ENCODE measurements at regions of chr9 and their contacts with region 1.

Region 1: GRCh38 chr9:98848450-98849149 is 41.1 kb downstream of the GALNT12 start:
- DNase-seq: peak; percentile 80 to 86 (median 81)
- H3K4me3 ChIP-seq: no peak overlapping the region
- H3K27ac ChIP-seq: no peak overlapping the region
- H3K4me1 ChIP-seq: peaks cover 0 to 6% (median 0%) of the 10 kb centered on the region in 4 experiments
- H3K27me3 ChIP-seq: no peaks in the 10 kb centered on the region

Region 2: DNA sequence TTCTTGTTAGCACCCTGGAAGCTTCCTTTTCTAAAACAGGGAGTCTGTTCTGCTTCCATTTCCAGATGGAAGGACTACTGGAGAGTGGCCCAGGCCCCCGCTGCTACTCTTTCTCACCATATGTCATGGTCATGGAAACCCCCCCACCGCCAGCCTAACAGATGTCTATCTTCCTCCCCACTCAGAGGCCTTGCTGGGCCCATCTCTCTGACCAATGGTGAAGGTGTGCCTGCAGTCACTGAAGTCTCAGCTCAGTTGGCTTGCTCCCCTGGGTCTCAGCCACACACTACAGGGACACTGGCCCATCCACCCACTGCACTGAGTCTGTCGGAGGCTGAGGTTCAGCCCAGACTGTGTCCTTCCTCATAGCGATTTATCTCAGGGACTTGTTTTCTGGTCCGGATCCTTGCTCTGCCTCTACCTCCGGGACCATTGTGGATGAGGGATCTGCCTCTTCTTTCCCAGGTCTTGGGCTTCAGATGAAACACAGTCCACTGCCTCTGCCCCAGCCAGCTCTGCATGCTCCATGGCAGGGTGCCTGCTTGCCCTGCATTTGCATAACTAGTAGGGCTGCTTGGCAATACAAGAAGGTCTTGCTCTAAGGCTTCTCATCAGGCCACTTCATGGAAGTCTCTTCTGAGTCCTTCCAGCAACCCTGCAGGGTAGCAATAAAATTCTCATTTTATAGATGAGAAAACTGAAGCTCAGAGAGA is 10.3 kb before region 1 on chr9:
- CTCF ChIA-PET with region 1: interaction called, 14 read pairs
- POLR2A ChIA-PET with region 1: no interaction called
- DNase-seq: no peak
- H3K4me3 ChIP-seq: no peak overlapping the region
- H3K27ac ChIP-seq: no peak overlapping the region
- H3K4me1 ChIP-seq: no peaks in the 10 kb centered on the region
- H3K27me3 ChIP-seq: no peaks in the 10 kb centered on the region

Region 3: GRCh38 chr9:98860871-98861293 is 12.3 kb after region 1 on chr9:
- CTCF ChIA-PET with region 1: interaction called, 10 read pairs
- POLR2A ChIA-PET with region 1: no interaction called
- DNase-seq: peak in 2 of 3 donors; percentile 22 to 25
- H3K4me3 ChIP-seq: no peak overlapping the region
- H3K27ac ChIP-seq: no peak overlapping the region
- H3K4me1 ChIP-seq: peaks cover 0 to 3% (median 0%) of the 10 kb centered on the region in 4 experiments
- H3K27me3 ChIP-seq: no peaks in the 10 kb centered on the region

Region 4: GRCh38 chr9:98974994-98975712 is 126.6 kb after region 1 on chr9:
- CTCF ChIA-PET with region 1: interaction called, 13 read pairs
- POLR2A ChIA-PET with region 1: no interaction called
- DNase-seq: peak; percentile 66 to 78 (median 71)
- H3K4me3 ChIP-seq: peak overlapping the region in 2 of 7 experiments; percentile 43 to 62
- H3K27ac ChIP-seq: no peak overlapping the region
- H3K4me1 ChIP-seq: peaks cover 0 to 9% (median 5%) of the 10 kb centered on the region in 4 experiments
- H3K27me3 ChIP-seq: peaks cover 0 to 14% (median 0%) of the 10 kb centered on the region in 5 experiments

Measured in common myeloid progenitor, CD34-positive (primary cell).